ENCODE measurements at regions of chr16 and their contacts with region 1.

Region 1: GRCh38 chr16:1413684-1414531 is 596 bp downstream of the UNKL start:
- DNase-seq: peak; percentile 43 to 73 (median 57)
- H3K4me3 ChIP-seq: peak overlapping the region; percentile 45 to 98 (median 74)
- H3K27ac ChIP-seq: peak overlapping the region in 4 of 5 donors; percentile 66 to 93 (median 70)
- H3K4me1 ChIP-seq: peaks cover 5 to 8% of the 10 kb centered on the region in 2 donors
- H3K27me3 ChIP-seq: no peaks in the 10 kb centered on the region
- CTCF ChIP-seq: peak; percentile 33 to 67 (median 56)
- POLR2A ChIP-seq: no peak

Region 2: GRCh38 chr16:1208239-1208830 is 205.6 kb before region 1 on chr16:
- intact Hi-C with region 1: no loop called
- DNase-seq: no peak
- H3K4me3 ChIP-seq: no peak overlapping the region
- H3K27ac ChIP-seq: no peak overlapping the region
- H3K4me1 ChIP-seq: no peaks in the 10 kb centered on the region
- H3K27me3 ChIP-seq: no peaks in the 10 kb centered on the region
- CTCF ChIP-seq: no peak
- POLR2A ChIP-seq: no peak

Region 3: DNA sequence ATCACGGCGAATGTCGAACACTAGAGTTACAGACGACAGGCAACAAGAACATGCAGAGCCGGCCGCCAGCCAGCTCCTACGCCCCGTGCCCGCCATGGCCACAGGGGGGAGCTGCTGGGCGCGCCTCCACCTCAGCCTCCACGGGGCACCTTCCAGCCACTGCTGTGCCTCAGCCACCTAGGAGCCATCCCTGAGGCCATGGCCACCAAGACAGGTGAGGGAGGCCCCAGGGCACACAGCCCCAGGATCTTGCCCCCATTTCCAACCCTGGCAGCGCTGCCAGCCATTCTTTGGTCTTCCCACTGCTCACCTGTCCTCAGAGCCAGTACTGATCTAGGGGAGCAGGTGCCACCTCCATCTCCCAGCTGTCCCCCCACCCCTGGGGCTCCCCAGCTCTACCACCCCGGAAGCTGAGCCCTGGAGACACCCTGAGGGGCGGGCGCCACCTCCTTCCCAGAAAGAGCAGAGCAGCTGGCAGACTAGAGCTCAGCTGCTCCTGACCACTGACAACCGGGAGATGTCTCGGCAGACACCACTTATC is 50.3 kb before region 1 on chr16:
- intact Hi-C with region 1: loop called in 1 of 2 experiments (anchors 10 kb)
- DNase-seq: peak; percentile 71 to 85 (median 81)
- H3K4me3 ChIP-seq: no peak overlapping the region
- H3K27ac ChIP-seq: peak overlapping the region in 3 of 5 donors; percentile 18 to 82 (median 60)
- H3K4me1 ChIP-seq: peaks cover 13 to 14% of the 10 kb centered on the region in 2 donors
- H3K27me3 ChIP-seq: no peaks in the 10 kb centered on the region
- CTCF ChIP-seq: peak; percentile 67 to 83 (median 74)
- POLR2A ChIP-seq: no peak

Region 4: GRCh38 chr16:1518626-1519135 is 104.8 kb after region 1 on chr16:
- intact Hi-C with region 1: no loop called
- DNase-seq: no peak
- H3K4me3 ChIP-seq: no peak overlapping the region
- H3K27ac ChIP-seq: no peak overlapping the region
- H3K4me1 ChIP-seq: no peaks in the 10 kb centered on the region
- H3K27me3 ChIP-seq: no peaks in the 10 kb centered on the region
- CTCF ChIP-seq: no peak
- POLR2A ChIP-seq: no peak

Region 5: GRCh38 chr16:1705688-1706385 is 291.9 kb after region 1 on chr16 and contains the start of gene MAPK8IP3:
- intact Hi-C with region 1: no loop called
- DNase-seq: peak; percentile 84 to 95 (median 89)
- H3K4me3 ChIP-seq: peak within 1 kb of the TSS; percentile 65 to 95 (median 78)
- H3K27ac ChIP-seq: peak within 1 kb of the TSS; percentile 66 to 100 (median 92)
- H3K4me1 ChIP-seq: peaks cover 34 to 37% of the 10 kb centered on the region in 2 donors
- H3K27me3 ChIP-seq: no peaks in the 10 kb centered on the region
- CTCF ChIP-seq: peak; percentile 19 to 100 (median 82)
- POLR2A ChIP-seq: peak; percentile 92 to 95
- total RNA-seq, gene MAPK8IP3: 30.1 to 97.1 (median 50.5) TPM

Measured in adrenal gland (tissue), 19 donors.